ENCODE measurements at regions of chr22 and their contacts with region 1.

Region 1: GRCh38 chr22:38843201-38843715 is 570 bp downstream of the NPTXR start:
- DNase-seq: peak in 1 of 2 donors; percentile 60
- ATAC-seq: peak; percentile 53 to 80 (median 75)
- H3K4me3 ChIP-seq: peak overlapping the region; percentile 18 to 64 (median 50)
- H3K27ac ChIP-seq: peak overlapping the region in 8 of 10 donors; percentile 39 to 67 (median 60)
- H3K4me1 ChIP-seq: peaks cover 3 to 20% (median 12%) of the 10 kb centered on the region in 9 donors
- H3K27me3 ChIP-seq: peaks cover 0 to 66% (median 13%) of the 10 kb centered on the region in 7 donors
- CTCF ChIP-seq: peak in 6 of 9 donors; percentile 9 to 58 (median 42)

Region 2: DNA sequence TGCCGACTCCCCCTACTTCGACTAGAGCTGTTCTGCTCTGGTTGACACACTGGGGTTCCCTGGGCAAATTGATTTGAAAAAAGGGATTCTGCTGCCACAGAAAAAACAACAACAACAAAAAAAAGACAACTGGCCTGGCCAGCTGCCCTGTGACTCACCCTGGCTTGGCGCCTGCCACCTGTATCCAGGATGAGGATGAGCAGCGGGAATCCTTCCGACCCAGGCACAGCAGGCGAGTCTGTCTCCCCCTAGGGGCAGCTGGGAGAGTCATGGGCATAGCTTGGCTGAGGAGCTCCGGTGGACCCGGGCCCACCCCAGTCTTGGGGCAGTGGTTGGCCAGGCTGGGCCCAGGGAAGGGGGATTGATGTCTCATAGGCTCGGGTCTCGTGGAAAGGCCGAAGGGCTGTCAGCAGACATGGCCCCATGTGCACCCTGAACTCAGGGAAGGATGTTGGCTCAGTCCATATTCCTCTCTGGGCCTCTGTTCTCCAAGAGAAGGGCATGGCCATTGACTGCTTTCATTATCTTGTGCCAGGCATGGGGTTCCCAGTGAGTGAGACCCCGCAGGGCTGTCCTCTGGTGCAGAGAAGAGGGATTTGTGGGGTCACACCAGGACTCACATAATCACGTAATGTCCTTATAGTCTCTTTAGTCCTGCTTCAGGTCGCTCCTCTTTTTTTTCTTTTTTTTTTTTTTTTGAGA is 77.0 kb before region 1 on chr22:
- intact Hi-C with region 1: loop called in 6 of 10 experiments (anchors 2 to 10 kb)
- DNase-seq: peak in 1 of 2 donors; percentile 41
- ATAC-seq: peak in 3 of 8 donors; percentile 18 to 52 (median 37)
- H3K4me3 ChIP-seq: no peak overlapping the region
- H3K27ac ChIP-seq: no peak overlapping the region
- H3K4me1 ChIP-seq: peaks cover 0 to 4% (median 0%) of the 10 kb centered on the region in 9 donors
- H3K27me3 ChIP-seq: peaks cover 0 to 7% (median 0%) of the 10 kb centered on the region in 7 donors
- CTCF ChIP-seq: peak; percentile 28 to 74 (median 64)

Region 3: GRCh38 chr22:38777087-38777671 is 66.1 kb before region 1 on chr22:
- intact Hi-C with region 1: loop called in 3 of 10 experiments (anchors 5 to 10 kb)
- DNase-seq: no peak
- ATAC-seq: no peak
- H3K4me3 ChIP-seq: no peak overlapping the region
- H3K27ac ChIP-seq: no peak overlapping the region
- H3K4me1 ChIP-seq: peaks cover 4 to 22% (median 18%) of the 10 kb centered on the region in 9 donors
- H3K27me3 ChIP-seq: no peaks in the 10 kb centered on the region
- CTCF ChIP-seq: no peak

Region 4: GRCh38 chr22:38782402-38783094 is 60.7 kb before region 1 on chr22:
- intact Hi-C with region 1: loop called in 3 of 10 experiments (anchors 5 to 10 kb)
- DNase-seq: no peak
- ATAC-seq: no peak
- H3K4me3 ChIP-seq: no peak overlapping the region
- H3K27ac ChIP-seq: peak overlapping the region in 8 of 10 donors; percentile 37 to 89 (median 78)
- H3K4me1 ChIP-seq: peaks cover 15 to 74% (median 53%) of the 10 kb centered on the region in 9 donors
- H3K27me3 ChIP-seq: no peaks in the 10 kb centered on the region
- CTCF ChIP-seq: no peak

Region 5: GRCh38 chr22:38788021-38788816 is 55.0 kb before region 1 on chr22:
- intact Hi-C with region 1: loop called in 3 of 10 experiments (anchors 5 kb)
- DNase-seq: peak; percentile 42 to 72
- ATAC-seq: peak; percentile 76 to 91 (median 81)
- H3K4me3 ChIP-seq: no peak overlapping the region
- H3K27ac ChIP-seq: peak overlapping the region; percentile 79 to 92 (median 84)
- H3K4me1 ChIP-seq: peaks cover 24 to 70% (median 46%) of the 10 kb centered on the region in 9 donors
- H3K27me3 ChIP-seq: no peaks in the 10 kb centered on the region
- CTCF ChIP-seq: no peak

Region 6: GRCh38 chr22:38793721-38794466 is 49.4 kb before region 1 on chr22 and contains the start of gene DNAL4:
- intact Hi-C with region 1: loop called in 3 of 10 experiments (anchors 5 kb)
- DNase-seq: peak; percentile 89 to 97
- ATAC-seq: peak; percentile 94 to 99 (median 98)
- H3K4me3 ChIP-seq: peak within 1 kb of the TSS; percentile 67 to 97 (median 74)
- H3K27ac ChIP-seq: peak within 1 kb of the TSS; percentile 52 to 93 (median 85)
- H3K4me1 ChIP-seq: peaks cover 4 to 24% (median 21%) of the 10 kb centered on the region in 9 donors
- H3K27me3 ChIP-seq: no peaks in the 10 kb centered on the region
- CTCF ChIP-seq: no peak
- total RNA-seq, gene DNAL4: 8.3 to 11.7 (median 9.9) TPM

Region 7: GRCh38 chr22:38802671-38803121 is 40.6 kb before region 1 on chr22:
- intact Hi-C with region 1: loop called in 1 of 10 experiments (anchors 5 kb)
- DNase-seq: peak in 1 of 2 donors; percentile 38
- ATAC-seq: peak in 7 of 8 donors; percentile 58 to 90 (median 79)
- H3K4me3 ChIP-seq: no peak overlapping the region
- H3K27ac ChIP-seq: no peak overlapping the region
- H3K4me1 ChIP-seq: peaks cover 0 to 7% (median 0%) of the 10 kb centered on the region in 9 donors
- H3K27me3 ChIP-seq: no peaks in the 10 kb centered on the region
- CTCF ChIP-seq: no peak

Region 8: DNA sequence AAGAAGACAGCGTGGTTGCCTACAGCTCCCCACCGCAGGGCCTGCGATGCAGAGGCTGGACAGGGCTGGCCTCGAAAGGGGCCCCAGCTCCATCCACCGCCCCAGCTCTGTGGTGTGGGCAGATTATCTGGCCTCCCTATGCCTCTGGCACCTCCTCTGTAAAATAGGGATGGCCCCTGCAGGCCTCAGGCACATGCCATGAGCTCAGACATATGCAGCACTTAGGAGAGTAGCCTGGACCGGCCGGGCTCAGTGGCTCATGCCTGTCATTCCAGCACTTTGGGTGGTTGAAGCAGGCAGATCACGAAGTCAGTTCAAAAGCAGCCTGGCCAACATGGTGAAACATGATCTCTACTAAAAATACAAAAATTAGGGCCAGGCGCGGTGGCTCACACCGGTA is 185.0 kb after region 1 on chr22:
- intact Hi-C with region 1: no loop called
- DNase-seq: no peak
- ATAC-seq: no peak
- H3K4me3 ChIP-seq: no peak overlapping the region
- H3K27ac ChIP-seq: no peak overlapping the region
- H3K4me1 ChIP-seq: no peaks in the 10 kb centered on the region
- H3K27me3 ChIP-seq: no peaks in the 10 kb centered on the region
- CTCF ChIP-seq: no peak

Measured in heart right ventricle (tissue), 16 donors.